H1 (cell line): ENCODE measurements at regions of chr2 and their contacts with region 1.

Region 1: DNA sequence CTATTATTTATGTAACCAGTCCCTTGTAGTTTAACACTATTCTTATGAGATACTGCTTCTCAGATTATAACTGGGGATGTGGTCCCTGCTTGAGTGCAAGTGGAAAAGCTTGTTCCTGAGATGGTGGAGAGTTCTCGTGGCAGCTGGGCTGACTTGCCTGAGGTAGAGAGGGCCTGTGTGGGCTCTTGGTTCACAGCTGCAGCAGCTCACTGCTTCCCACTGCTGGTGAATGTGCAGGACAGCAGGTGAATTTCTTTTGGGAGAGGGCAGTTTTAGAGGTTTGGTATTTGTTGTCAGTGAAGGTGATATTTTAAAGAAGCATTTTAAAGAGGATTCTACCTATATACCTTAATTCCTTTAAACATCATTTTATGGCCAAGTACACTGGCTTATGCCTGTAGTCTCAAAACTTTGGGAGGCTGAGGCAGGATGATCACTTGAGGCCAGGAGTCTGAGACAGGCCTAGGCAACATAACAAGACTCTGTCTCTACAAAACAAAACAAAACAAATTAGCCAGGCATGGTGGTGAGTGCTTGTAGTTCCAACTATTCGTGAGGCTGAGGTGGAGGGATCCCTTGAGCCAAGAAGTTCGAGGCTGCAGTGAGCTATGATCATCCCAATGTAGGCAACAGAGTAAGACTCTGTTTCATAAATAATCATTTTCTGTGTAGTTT is 94.8 kb downstream of the MTA3 start:
- DNase-seq: peak in 1 of 2 experiments; percentile 44
- H3K4me3 ChIP-seq: no peak overlapping the region
- H3K27ac ChIP-seq: 0 out of 2 replicates have a peak overlapping the region, but pooled peaks have one; percentile 4
- H3K4me1 ChIP-seq: peaks cover 3 to 12% (median 10%) of the 10 kb centered on the region in 4 experiments; a peak in 5 of 7 replicates
- H3K27me3 ChIP-seq: no peaks in the 10 kb centered on the region
- CTCF ChIP-seq: peak; percentile 92 to 96 (median 93)
- EP300 ChIP-seq: no peak
- POLR2A ChIP-seq: no peak
- RAD21 ChIP-seq: peak; percentile 94 to 95

Region 2: GRCh38 chr2:42494355-42495233 is 168.6 kb before region 1 on chr2:
- CTCF ChIA-PET with region 1: interaction called, 25 read pairs
- POLR2A ChIA-PET with region 1: no interaction called
- DNase-seq: peak; percentile 88
- H3K4me3 ChIP-seq: peak overlapping the region; percentile 67 to 93 (median 79)
- H3K27ac ChIP-seq: peak overlapping the region; percentile 34; the same call in 1 of the 2 replicates
- H3K4me1 ChIP-seq: peaks cover 3 to 9% (median 6%) of the 10 kb centered on the region in 4 experiments; a peak in 5 of 7 replicates
- H3K27me3 ChIP-seq: no peaks in the 10 kb centered on the region; a peak in 1 of 7 replicates
- CTCF ChIP-seq: peak; percentile 63 to 89 (median 86)
- EP300 ChIP-seq: no peak
- POLR2A ChIP-seq: peak in 1 of 2 experiments; percentile 55; a peak in 1 of 3 replicates
- RAD21 ChIP-seq: peak; percentile 83 to 86

Region 3: GRCh38 chr2:42513257-42513918 is 149.9 kb before region 1 on chr2:
- CTCF ChIA-PET with region 1: interaction called, 26 read pairs
- POLR2A ChIA-PET with region 1: interaction called, 3 read pairs
- DNase-seq: peak in 1 of 2 experiments; percentile 62
- H3K4me3 ChIP-seq: no peak overlapping the region
- H3K27ac ChIP-seq: no peak overlapping the region
- H3K4me1 ChIP-seq: 0 out of 7 replicates have a peak, but pooled peaks cover 0 to 3% (median 0%) of the 10 kb centered on the region in 4 experiments
- H3K27me3 ChIP-seq: no peaks in the 10 kb centered on the region
- CTCF ChIP-seq: peak in 2 of 3 experiments; percentile 61 to 84; a peak in 3 of 4 replicates
- EP300 ChIP-seq: no peak
- POLR2A ChIP-seq: no peak
- RAD21 ChIP-seq: peak; percentile 79 to 86

Region 4: DNA sequence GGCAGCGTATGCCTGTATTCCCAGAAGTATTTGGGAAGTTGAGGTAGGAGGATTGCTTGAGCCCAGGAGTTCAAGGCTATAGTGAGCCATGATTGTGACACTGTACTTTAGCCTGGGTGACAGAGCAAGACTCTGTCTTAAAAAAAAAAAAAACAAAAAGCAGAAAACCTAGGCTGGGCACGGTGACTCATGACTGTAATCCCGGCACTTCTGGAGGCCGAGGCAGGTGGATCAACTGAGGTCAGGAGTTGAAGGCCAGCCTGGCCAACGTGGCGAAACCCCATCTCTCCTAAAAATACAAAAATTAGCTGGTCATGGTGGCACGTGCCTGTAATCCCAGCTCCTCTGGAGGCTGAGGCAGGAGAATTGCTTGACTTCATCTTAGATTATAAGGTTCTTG is 48.4 kb before region 1 on chr2:
- CTCF ChIA-PET with region 1: no interaction called
- POLR2A ChIA-PET with region 1: no interaction called
- DNase-seq: no peak
- H3K4me3 ChIP-seq: no peak overlapping the region
- H3K27ac ChIP-seq: no peak overlapping the region
- H3K4me1 ChIP-seq: no peaks in the 10 kb centered on the region
- H3K27me3 ChIP-seq: no peaks in the 10 kb centered on the region
- CTCF ChIP-seq: no peak
- EP300 ChIP-seq: no peak
- POLR2A ChIP-seq: no peak
- RAD21 ChIP-seq: no peak

Region 5: DNA sequence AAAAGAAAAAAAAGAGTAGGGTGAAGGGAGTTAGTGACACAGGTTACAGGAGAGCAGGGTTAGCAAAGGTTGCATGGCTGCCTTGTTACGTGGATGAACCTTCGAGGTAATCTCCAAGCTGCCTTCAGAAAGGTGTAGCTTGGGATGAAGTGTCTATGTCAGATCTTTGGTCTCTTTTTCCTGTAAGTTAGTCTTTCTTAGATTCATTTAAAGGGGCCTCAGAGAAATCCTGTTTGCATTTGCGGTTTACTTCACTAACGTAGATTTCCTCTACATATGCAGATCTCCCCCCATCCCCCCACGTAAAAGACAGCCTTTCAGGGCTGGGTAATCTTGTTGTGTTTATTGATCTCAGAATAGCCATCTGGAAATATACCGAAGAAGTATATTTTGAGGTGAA is 11.2 kb before region 1 on chr2:
- CTCF ChIA-PET with region 1: interaction called, 21 read pairs
- POLR2A ChIA-PET with region 1: interaction called, 4 read pairs
- DNase-seq: no peak
- H3K4me3 ChIP-seq: peak overlapping the region in 2 of 4 experiments; percentile 1 to 5; a peak in 2 of 8 replicates
- H3K27ac ChIP-seq: no peak overlapping the region
- H3K4me1 ChIP-seq: peaks cover 0 to 11% (median 6%) of the 10 kb centered on the region in 4 experiments; a peak in 5 of 7 replicates
- H3K27me3 ChIP-seq: no peaks in the 10 kb centered on the region
- CTCF ChIP-seq: no peak
- EP300 ChIP-seq: no peak
- POLR2A ChIP-seq: no peak
- RAD21 ChIP-seq: no peak

Region 6: GRCh38 chr2:42673989-42674579 is 10.8 kb after region 1 on chr2:
- CTCF ChIA-PET with region 1: interaction called, 16 read pairs
- POLR2A ChIA-PET with region 1: interaction called, 3 read pairs
- DNase-seq: no peak
- H3K4me3 ChIP-seq: no peak overlapping the region
- H3K27ac ChIP-seq: no peak overlapping the region
- H3K4me1 ChIP-seq: no peaks in the 10 kb centered on the region; a peak in 1 of 7 replicates
- H3K27me3 ChIP-seq: no peaks in the 10 kb centered on the region
- CTCF ChIP-seq: no peak
- EP300 ChIP-seq: no peak
- POLR2A ChIP-seq: no peak
- RAD21 ChIP-seq: no peak

Region 7: GRCh38 chr2:42693013-42693615 is 29.9 kb after region 1 on chr2:
- CTCF ChIA-PET with region 1: interaction called, 12 read pairs
- POLR2A ChIA-PET with region 1: no interaction called
- DNase-seq: no peak
- H3K4me3 ChIP-seq: no peak overlapping the region
- H3K27ac ChIP-seq: no peak overlapping the region
- H3K4me1 ChIP-seq: no peaks in the 10 kb centered on the region
- H3K27me3 ChIP-seq: no peaks in the 10 kb centered on the region
- CTCF ChIP-seq: no peak
- EP300 ChIP-seq: no peak
- POLR2A ChIP-seq: no peak
- RAD21 ChIP-seq: no peak

Region 8: DNA sequence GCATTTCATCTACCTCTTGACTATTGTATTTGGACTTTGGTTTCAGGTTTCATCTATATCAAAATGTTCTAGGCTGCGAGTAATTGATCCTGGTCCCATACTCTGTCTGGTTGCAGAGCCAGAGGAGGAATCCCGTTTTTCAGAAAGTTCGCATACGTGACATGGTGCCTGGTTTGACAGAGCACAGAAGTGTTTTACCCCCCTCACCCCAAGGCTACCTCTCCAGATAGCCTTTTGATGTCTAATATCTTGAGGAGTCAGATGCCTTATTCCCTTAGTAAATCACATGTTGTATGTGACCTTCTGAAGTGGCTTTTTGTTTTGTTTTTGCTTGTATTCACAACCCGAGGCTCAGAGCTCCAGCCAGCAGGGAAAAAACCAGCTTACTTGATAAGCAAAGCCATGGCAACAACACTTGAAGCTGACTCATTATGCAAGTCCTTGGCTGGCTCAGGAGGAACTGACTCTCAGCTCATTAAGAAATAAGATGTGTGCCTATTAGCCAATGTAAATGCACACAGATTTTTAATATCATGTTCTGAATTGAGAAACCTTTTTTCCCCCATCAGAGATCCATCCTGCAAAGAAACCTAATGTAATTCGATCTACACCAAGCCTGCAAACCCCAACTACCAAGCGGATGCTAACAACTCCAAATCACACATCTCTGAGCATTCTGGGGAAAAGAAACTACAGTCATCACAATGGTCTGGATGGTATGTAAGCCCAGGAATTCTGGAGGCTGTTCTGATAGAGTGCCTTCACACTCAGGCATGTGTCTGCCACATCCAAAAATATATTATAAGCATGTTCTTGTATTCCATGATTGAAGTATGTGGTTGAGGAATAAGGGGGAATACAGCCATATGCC is 59.3 kb after region 1 on chr2:
- CTCF ChIA-PET with region 1: no interaction called
- POLR2A ChIA-PET with region 1: no interaction called
- DNase-seq: no peak
- H3K4me3 ChIP-seq: no peak overlapping the region
- H3K27ac ChIP-seq: 0 out of 2 replicates have a peak overlapping the region, but pooled peaks have one; percentile 47
- H3K4me1 ChIP-seq: peaks cover 0 to 10% (median 0%) of the 10 kb centered on the region in 4 experiments; a peak in 2 of 7 replicates
- H3K27me3 ChIP-seq: no peaks in the 10 kb centered on the region
- CTCF ChIP-seq: no peak
- EP300 ChIP-seq: no peak
- POLR2A ChIP-seq: no peak
- RAD21 ChIP-seq: no peak

Region 9: DNA sequence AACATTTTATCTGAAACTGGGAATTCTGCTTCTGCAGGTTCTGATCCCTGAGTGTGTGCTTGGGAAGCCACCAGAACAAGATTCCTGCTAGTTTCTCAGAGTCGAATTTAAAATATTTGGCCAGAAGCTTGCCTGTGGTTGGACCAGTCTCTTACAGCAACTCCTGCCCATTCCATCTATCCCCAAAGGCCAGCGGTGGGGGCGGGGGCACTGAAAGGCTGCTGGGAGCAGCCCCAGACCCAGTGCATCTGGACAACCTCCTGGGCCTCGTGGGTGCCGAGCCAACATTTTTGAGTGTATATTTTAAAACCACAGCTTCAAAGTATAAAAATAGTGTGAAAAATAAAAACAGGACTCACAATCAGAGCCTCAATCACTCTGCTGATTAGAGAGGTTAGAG is 601.8 kb after region 1 on chr2:
- CTCF ChIA-PET with region 1: no interaction called
- POLR2A ChIA-PET with region 1: no interaction called
- DNase-seq: no peak
- H3K4me3 ChIP-seq: no peak overlapping the region
- H3K27ac ChIP-seq: no peak overlapping the region
- H3K4me1 ChIP-seq: peaks cover 0 to 12% (median 3%) of the 10 kb centered on the region in 4 experiments; a peak in 3 of 7 replicates
- H3K27me3 ChIP-seq: no peaks in the 10 kb centered on the region
- CTCF ChIP-seq: no peak
- EP300 ChIP-seq: no peak
- POLR2A ChIP-seq: no peak
- RAD21 ChIP-seq: no peak